Heart right ventricle (tissue), 16 donors: ENCODE measurements at regions of chr4 and their contacts with region 1.

Region 1: GRCh38 chr4:183840311-183840710 is 64.8 kb upstream of the STOX2 start:
- DNase-seq: peak; percentile 76 to 84
- ATAC-seq: peak; percentile 59 to 90 (median 79)
- H3K4me3 ChIP-seq: no peak overlapping the region
- H3K27ac ChIP-seq: no peak overlapping the region
- H3K4me1 ChIP-seq: peaks cover 0 to 15% (median 7%) of the 10 kb centered on the region in 9 donors
- H3K27me3 ChIP-seq: no peaks in the 10 kb centered on the region
- CTCF ChIP-seq: peak; percentile 74 to 96 (median 90)

Region 2: DNA sequence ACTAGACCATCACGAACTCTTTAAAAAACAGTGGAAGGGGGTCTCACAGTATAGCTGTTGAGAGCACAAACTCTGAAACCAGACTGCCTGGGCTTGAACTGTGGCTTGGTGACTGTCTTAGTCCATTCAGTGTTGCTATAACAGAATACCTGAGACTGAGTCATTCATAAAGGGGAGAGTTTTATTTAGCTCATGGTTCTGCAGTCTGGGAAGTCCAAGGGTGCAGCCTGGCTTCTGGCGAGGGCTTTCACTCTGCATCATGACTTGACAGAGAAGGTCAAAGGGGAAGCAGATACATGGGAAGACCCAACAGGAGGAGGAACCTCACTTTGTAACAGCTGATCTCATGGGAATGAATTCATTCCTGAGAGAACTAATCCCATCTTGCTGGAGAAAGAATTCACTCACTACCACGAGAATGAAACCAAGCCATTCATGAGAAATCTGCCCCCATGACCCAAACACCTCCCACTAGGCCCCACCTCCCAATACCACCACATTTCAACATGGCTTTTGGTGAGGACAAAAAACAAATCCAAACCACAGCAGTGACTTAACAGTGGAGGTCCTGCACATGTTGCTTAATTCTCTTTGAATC is 51.9 kb before region 1 on chr4:
- intact Hi-C with region 1: no loop called
- DNase-seq: no peak
- ATAC-seq: no peak
- H3K4me3 ChIP-seq: no peak overlapping the region
- H3K27ac ChIP-seq: no peak overlapping the region
- H3K4me1 ChIP-seq: peaks cover 0 to 33% (median 16%) of the 10 kb centered on the region in 9 donors
- H3K27me3 ChIP-seq: no peaks in the 10 kb centered on the region
- CTCF ChIP-seq: no peak

Region 3: DNA sequence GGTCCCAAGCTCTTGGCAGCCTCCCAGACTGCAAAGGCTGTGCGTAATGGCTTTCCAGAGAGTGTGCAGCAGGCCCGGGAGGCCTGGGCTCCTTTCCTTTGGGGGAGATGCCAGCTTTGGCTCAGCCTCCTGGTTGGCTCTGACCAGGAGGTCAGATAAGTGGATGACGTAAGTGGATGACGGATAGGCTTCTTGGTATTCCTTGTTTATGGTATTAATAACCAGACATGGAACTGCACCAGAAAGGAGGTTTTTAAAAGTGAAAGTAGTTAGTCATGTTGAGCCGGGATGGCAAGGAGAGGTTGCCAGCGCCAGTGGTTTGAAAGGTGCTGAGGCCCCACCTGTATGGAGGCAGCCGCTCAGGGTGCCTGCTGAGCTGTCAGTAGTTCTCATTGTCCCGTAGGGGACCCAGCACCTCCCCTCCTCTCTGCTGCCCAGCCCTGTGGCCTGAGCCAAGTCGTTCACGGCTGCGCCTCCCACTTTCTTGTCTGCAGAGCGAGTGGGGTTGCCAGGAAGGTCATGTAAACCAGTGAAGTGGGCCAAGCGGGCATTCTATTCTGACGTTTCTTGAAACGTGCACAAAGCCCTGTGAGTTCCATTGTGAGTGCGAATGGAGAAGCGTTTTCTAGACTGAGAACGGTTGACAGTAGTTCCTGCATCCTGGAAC is 36.1 kb after region 1 on chr4:
- intact Hi-C with region 1: loop called in 2 of 10 experiments (anchors 5 kb)
- DNase-seq: peak; percentile 88
- ATAC-seq: peak; percentile 88 to 98 (median 96)
- H3K4me3 ChIP-seq: peak overlapping the region in 9 of 10 donors; percentile 23 to 51 (median 44)
- H3K27ac ChIP-seq: peak overlapping the region; percentile 71 to 88 (median 81)
- H3K4me1 ChIP-seq: peaks cover 0 to 34% (median 22%) of the 10 kb centered on the region in 9 donors
- H3K27me3 ChIP-seq: no peaks in the 10 kb centered on the region
- CTCF ChIP-seq: no peak

Region 4: DNA sequence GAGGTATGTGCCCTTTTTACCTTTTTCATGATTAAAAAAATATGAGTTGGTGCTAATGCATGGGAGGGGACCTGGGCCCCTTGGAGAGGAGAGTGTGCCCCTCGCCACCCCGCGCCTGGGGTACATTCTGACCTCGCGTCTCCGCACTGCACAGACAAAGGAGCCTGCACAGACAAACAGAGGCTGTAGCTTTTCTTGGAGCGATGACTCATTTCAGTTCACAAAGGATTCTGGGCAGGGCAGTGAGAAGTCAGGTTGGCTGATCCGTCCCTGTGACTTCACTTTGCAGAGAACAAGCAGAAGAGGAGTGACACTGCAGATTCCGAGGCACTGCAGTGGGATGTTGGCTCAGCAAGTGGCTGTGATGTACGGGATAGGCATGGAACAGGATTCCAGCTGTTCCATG is 147.7 kb after region 1 on chr4:
- intact Hi-C with region 1: loop called in 5 of 10 experiments (anchors 5 to 10 kb)
- DNase-seq: peak; percentile 44 to 82
- ATAC-seq: peak; percentile 90 to 96 (median 93)
- H3K4me3 ChIP-seq: peak overlapping the region in 9 of 10 donors; percentile 19 to 60 (median 47)
- H3K27ac ChIP-seq: peak overlapping the region; percentile 74 to 93 (median 84)
- H3K4me1 ChIP-seq: peaks cover 0 to 47% (median 31%) of the 10 kb centered on the region in 9 donors
- H3K27me3 ChIP-seq: no peaks in the 10 kb centered on the region
- CTCF ChIP-seq: no peak

Region 5: DNA sequence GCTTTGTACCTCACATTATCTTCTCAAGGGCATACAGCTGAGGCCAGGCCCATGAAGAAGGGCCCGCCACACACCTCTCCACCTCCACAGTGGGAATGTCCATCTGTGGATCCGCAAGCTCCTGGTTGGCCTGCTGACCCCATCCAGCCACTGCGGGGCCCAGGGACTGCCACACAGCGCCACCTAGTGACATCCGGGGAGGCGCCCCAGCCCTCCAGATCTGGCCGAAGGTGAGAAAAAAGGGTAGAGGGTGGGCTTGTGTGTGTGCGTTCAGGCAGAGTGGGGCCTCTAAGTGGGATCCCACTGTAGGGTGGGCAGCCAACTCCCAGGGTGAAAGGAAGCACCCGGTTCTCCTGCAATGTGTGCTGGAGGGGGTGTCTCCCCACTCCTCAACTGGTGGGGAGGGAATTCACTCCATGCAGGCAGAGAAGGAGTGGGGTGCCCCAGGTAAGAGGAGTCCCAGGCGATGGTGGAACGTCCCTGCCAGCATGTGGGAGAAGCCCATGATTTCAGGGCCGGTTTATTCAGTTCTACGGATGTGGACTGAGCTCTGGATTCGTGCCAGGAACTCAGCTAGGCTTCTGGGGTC is 260.1 kb after region 1 on chr4:
- intact Hi-C with region 1: loop called in 9 of 10 experiments (anchors 1 to 5 kb)
- DNase-seq: peak; percentile 11 to 73
- ATAC-seq: peak; percentile 40 to 82 (median 67)
- H3K4me3 ChIP-seq: no peak overlapping the region
- H3K27ac ChIP-seq: no peak overlapping the region
- H3K4me1 ChIP-seq: peaks cover 0 to 44% (median 20%) of the 10 kb centered on the region in 9 donors
- H3K27me3 ChIP-seq: no peaks in the 10 kb centered on the region
- CTCF ChIP-seq: peak; percentile 62 to 78 (median 72)

Region 6: GRCh38 chr4:184250795-184251669 is 410.7 kb after region 1 on chr4:
- intact Hi-C with region 1: loop called in 1 of 10 experiments (anchors 10 kb)
- DNase-seq: no peak
- ATAC-seq: peak in 2 of 8 donors; percentile 22 to 55
- H3K4me3 ChIP-seq: no peak overlapping the region
- H3K27ac ChIP-seq: no peak overlapping the region
- H3K4me1 ChIP-seq: peaks cover 0 to 10% (median 0%) of the 10 kb centered on the region in 9 donors
- H3K27me3 ChIP-seq: no peaks in the 10 kb centered on the region
- CTCF ChIP-seq: peak; percentile 34 to 69 (median 62)